A673 (cell line): ENCODE measurements at regions of chr7 and their contacts with region 1.

Region 1: GRCh38 chr7:105336009-105336408 is 52.7 kb downstream of the SRPK2 start:
- DNase-seq: peak; percentile 29
- H3K4me3 ChIP-seq: no peak overlapping the region
- H3K27ac ChIP-seq: no peak overlapping the region
- H3K4me1 ChIP-seq: peaks cover 6% of the 10 kb centered on the region
- H3K27me3 ChIP-seq: no peaks in the 10 kb centered on the region
- CTCF ChIP-seq: peak; percentile 66

Region 2: GRCh38 chr7:104931181-104931781 is 404.7 kb before region 1 on chr7:
- CTCF ChIA-PET with region 1: no interaction called
- POLR2A ChIA-PET with region 1: no interaction called
- intact Hi-C with region 1: loop called (anchors 5 kb)
- DNase-seq: peak; percentile 49
- H3K4me3 ChIP-seq: no peak overlapping the region
- H3K27ac ChIP-seq: no peak overlapping the region
- H3K4me1 ChIP-seq: peaks cover 10% of the 10 kb centered on the region
- H3K27me3 ChIP-seq: no peaks in the 10 kb centered on the region
- CTCF ChIP-seq: no peak

Region 3: DNA sequence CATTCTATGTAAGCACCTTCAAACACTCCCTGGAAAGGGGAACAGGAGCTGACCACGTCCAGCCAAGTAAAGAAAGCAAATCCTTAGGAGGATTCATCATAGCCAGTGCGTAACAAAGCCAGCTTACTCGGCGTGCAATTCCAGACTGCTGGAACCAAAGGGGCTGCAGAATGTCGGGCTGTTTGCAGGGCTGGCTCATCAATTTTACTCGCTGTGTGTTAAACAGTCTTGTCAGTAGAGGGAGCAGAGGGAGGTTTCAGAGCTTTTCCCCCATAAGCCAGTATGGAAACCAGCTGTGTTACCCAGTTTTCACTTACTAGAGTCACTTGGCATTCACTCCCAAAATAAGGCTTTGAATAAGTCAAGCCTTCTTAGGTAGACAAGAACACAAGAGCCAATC is 194.9 kb before region 1 on chr7:
- CTCF ChIA-PET with region 1: no interaction called
- POLR2A ChIA-PET with region 1: no interaction called
- intact Hi-C with region 1: loop called (anchors 5 kb)
- DNase-seq: peak; percentile 66
- H3K4me3 ChIP-seq: no peak overlapping the region
- H3K27ac ChIP-seq: no peak overlapping the region
- H3K4me1 ChIP-seq: no peaks in the 10 kb centered on the region
- H3K27me3 ChIP-seq: no peaks in the 10 kb centered on the region
- CTCF ChIP-seq: peak; percentile 65